Psoas muscle (tissue), 8 donors: ENCODE measurements at regions of chr4 and their contacts with region 1.

Region 1: GRCh38 chr4:176268963-176269362 is at the start of gene ASB5:
- DNase-seq: peak; percentile 25 to 80
- ATAC-seq: peak; percentile 68 to 79 (median 70)
- H3K4me3 ChIP-seq: peak within 1 kb of the TSS; percentile 70
- H3K27ac ChIP-seq: peak within 1 kb of the TSS; percentile 94
- H3K4me1 ChIP-seq: peaks cover 24% of the 10 kb centered on the region
- H3K27me3 ChIP-seq: no peaks in the 10 kb centered on the region
- CTCF ChIP-seq: no peak
- total RNA-seq, gene ASB5: 247 to 661 (median 465) TPM

Region 2: DNA sequence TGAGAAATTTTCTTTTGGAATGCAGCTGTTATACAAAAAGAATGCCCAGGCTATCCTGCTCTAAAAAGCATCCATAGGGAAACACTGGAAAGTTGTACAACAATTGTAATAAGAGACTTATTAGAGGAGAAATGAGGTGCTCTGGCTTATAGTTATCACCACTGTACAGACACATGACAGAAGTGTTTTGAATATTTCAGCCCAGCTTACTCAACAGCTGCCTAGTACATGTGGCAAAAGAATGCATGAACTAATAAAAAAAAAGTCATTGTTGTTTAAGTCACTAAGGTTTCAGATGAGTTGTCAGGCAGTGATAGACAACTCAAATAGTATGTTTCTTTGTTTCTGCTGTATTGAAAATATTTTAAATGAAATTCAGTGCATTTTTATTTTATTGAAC is 764.6 kb before region 1 on chr4:
- intact Hi-C with region 1: no loop called
- DNase-seq: no peak
- ATAC-seq: no peak
- H3K4me3 ChIP-seq: no peak overlapping the region
- H3K27ac ChIP-seq: no peak overlapping the region
- H3K4me1 ChIP-seq: no peaks in the 10 kb centered on the region
- H3K27me3 ChIP-seq: no peaks in the 10 kb centered on the region
- CTCF ChIP-seq: no peak

Region 3: GRCh38 chr4:176230836-176231235 is 38.1 kb before region 1 on chr4:
- intact Hi-C with region 1: loop called in 1 of 2 experiments (anchors 5 kb)
- DNase-seq: no peak
- ATAC-seq: peak in 3 of 4 donors; percentile 57 to 66 (median 62)
- H3K4me3 ChIP-seq: peak overlapping the region; percentile 48
- H3K27ac ChIP-seq: peak overlapping the region; percentile 95
- H3K4me1 ChIP-seq: peaks cover 81% of the 10 kb centered on the region
- H3K27me3 ChIP-seq: no peaks in the 10 kb centered on the region
- CTCF ChIP-seq: no peak

Region 4: DNA sequence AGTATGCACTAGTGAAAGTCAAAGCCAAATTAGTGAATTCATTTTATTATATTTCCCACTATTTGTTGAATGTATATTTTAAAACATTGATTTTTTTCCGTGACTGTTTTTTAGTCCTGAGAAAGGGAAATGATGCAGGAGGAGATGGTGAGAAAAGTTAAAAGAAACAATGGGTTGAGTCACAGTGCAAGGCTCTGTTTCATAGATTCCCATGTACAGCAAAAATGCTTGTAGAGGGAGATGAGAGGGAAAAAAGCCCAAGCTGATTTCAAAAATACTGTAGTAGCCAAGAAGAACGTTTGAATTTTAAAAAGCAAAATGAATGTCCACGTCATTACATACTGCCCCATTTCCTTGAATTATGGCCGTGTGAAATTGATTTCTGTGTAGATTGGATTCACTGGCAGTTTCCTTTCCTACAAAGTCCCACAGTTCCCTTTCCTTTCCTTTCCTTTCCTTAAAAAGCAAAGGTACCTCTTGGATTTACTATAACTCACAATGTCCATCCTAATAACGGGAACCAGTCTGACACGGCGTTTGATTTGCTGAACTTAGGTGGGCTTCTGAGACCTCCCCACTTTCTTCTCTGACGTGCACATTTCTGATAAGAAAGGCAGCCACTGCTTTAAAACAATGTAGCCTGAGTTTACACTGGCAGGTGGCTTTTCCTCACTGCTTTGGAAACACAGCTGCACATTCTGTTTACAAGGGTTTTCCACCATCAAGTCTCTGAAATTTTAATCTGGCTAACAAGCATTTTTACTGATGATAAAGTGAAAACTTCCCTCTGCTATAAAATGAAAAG is 114.5 kb after region 1 on chr4:
- intact Hi-C with region 1: no loop called
- DNase-seq: no peak
- ATAC-seq: no peak
- H3K4me3 ChIP-seq: no peak overlapping the region
- H3K27ac ChIP-seq: no peak overlapping the region
- H3K4me1 ChIP-seq: no peaks in the 10 kb centered on the region
- H3K27me3 ChIP-seq: no peaks in the 10 kb centered on the region
- CTCF ChIP-seq: no peak